ENCODE measurements at regions of chr1 and their contacts with region 1.

Region 1: DNA sequence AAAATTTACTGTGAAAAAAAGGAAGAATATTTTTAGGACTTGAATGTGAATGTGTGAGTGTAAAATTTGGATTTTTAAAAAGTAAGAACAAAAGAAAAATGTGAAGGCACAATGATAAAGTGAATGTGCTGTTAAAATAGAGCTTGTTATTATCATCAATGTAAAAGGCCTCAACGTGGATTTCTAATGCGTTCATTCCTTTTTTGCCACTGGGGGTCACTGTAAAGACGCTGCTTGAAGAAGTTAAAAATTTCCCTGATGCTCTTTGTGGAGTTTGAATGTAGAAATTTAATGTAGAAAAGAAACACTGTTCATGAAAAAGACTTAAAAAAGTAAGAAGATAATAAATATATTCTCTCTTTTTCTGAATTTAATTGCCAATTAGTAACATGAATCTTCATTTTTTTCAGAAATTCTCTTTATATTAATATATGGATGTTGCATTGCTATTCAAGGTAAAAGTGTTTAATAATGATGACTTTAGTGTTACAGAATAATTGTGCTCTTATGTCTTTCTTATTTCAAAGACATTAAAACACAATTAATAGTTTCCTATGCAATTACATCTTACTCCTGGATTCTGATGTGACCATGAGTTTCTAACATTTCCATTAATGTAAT is 161.5 kb downstream of the DNM3 start:
- DNase-seq: peak; percentile 65 to 85 (median 81)
- H3K4me3 ChIP-seq: no peak overlapping the region
- H3K27ac ChIP-seq: no peak overlapping the region
- H3K4me1 ChIP-seq: peaks cover 3 to 20% (median 12%) of the 10 kb centered on the region in 4 experiments
- H3K27me3 ChIP-seq: no peaks in the 10 kb centered on the region

Region 2: GRCh38 chr1:171984850-171985485 is 17.9 kb before region 1 on chr1:
- CTCF ChIA-PET with region 1: interaction called, 19 read pairs
- POLR2A ChIA-PET with region 1: no interaction called
- DNase-seq: peak; percentile 46 to 56 (median 49)
- H3K4me3 ChIP-seq: no peak overlapping the region
- H3K27ac ChIP-seq: no peak overlapping the region
- H3K4me1 ChIP-seq: peaks cover 0 to 10% (median 0%) of the 10 kb centered on the region in 4 experiments
- H3K27me3 ChIP-seq: no peaks in the 10 kb centered on the region

Region 3: DNA sequence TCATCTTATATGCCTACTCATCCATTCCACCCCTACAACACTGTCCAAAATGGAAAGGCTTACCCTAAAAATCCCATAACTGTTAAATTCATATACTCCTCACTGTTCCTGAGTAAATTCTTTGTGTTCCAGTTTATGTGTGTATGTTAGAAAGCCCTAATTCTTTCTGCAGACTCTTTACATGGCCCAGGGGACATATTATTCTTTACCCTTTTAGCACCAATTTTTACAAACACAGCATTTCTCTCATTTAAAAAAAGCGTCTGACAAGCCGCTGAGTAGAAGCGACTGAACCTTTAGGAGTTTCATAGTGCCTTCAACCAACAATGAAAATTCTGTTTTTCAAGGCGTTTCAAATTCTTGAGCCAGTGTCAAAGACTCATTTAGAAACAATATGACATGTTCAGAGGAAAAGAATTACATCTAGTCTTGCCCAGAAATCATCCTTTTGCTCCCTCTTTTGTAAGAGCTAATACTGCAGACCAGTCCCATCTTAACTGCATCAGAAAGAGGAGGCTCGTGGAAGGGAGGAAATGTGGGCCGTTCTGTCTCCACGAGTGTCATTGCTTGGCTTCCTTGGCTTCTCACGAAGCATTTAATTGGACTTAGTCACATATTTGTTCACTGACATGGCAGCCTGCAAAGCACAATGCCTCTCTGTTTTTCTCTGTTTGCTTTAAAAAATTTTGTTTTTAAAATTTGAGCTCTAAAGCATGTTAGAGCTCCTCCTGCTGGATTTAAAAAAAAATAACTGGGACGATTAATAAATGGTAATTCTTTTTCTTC is 396.3 kb after region 1 on chr1:
- CTCF ChIA-PET with region 1: interaction called, 46 read pairs
- POLR2A ChIA-PET with region 1: no interaction called
- DNase-seq: peak; percentile 36 to 68 (median 59)
- H3K4me3 ChIP-seq: peak overlapping the region in 4 of 7 experiments; percentile 15 to 67 (median 36)
- H3K27ac ChIP-seq: no peak overlapping the region
- H3K4me1 ChIP-seq: peaks cover 6 to 11% (median 7%) of the 10 kb centered on the region in 4 experiments
- H3K27me3 ChIP-seq: no peaks in the 10 kb centered on the region

Region 4: GRCh38 chr1:172443626-172444453 is 441.0 kb after region 1 on chr1 and contains the start of gene PIGC:
- CTCF ChIA-PET with region 1: interaction called, 20 read pairs
- POLR2A ChIA-PET with region 1: no interaction called
- DNase-seq: peak; percentile 88 to 93 (median 92)
- H3K4me3 ChIP-seq: peak within 1 kb of the TSS; percentile 80 to 92 (median 89)
- H3K27ac ChIP-seq: peak within 1 kb of the TSS; percentile 47 to 81
- H3K4me1 ChIP-seq: peaks cover 5 to 18% (median 10%) of the 10 kb centered on the region in 4 experiments
- H3K27me3 ChIP-seq: no peaks in the 10 kb centered on the region

Measured in common myeloid progenitor, CD34-positive (primary cell).